ENCODE measurements at regions of chr5 and their contacts with region 1.

Region 1: DNA sequence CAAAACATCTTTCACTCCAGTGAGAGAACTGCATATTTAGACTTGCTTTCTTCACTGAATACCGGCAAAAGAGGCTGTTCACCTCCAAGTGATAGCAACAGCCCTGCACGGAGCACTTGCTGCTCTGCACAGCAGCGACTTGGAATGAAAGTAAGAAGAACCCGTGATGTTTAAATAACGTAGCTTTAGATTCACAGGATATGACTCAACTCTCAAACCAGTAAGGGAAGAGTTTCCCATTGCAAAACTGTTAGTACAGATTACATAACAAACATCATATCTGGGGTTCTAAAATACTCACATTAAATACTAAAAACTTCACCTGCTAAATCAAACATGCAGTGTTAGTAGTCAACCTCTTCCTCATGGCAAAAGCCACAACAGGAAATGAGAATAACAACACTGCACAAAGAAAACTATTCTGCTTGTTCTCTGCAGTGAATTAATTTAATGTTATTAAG is 203.4 kb downstream of the MCTP1 start:
- DNase-seq: peak; percentile 93
- H3K4me3 Mint-ChIP-seq: peak overlapping the region; percentile 76
- H3K27ac Mint-ChIP-seq: peak overlapping the region; percentile 84
- H3K4me1 Mint-ChIP-seq: peaks cover 28% of the 10 kb centered on the region
- H3K27me3 Mint-ChIP-seq: no peaks in the 10 kb centered on the region
- CTCF ChIP-seq: no peak

Region 2: DNA sequence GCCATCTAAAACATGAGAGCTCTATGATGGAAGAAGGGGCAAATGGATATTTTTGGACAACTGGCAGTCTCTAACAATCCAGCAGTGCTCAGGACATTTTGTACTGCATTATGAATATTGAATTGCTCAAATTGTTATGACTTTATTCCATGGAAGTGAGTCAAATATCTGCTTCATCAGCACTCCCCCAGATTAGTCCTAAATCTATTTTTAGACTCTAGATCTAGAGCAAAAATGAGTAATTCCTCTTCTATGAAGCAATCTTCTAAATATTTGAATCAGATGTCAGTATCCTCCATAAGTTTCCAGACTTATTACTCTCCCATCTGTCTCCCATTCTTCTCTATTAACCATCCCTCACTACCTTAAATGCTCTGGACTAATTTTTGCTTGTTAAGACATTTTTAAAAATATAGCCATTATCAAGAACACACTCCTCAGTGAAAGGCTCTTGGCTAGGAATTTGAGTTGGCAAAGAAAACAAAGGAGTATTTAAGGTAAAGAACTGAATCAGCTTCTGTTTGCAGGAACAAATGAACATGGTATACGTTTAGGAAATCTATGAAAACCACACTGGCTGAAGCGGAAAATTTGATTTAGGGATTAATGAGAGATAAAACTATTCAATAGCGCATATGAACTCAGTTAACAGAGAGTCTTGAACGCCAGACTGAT is 97.5 kb before region 1 on chr5:
- CTCF ChIA-PET with region 1: interaction called, 7 read pairs
- POLR2A ChIA-PET with region 1: interaction called, 7 read pairs
- intact Hi-C with region 1: loop called (anchors 2 kb)
- DNase-seq: peak; percentile 58
- H3K4me3 Mint-ChIP-seq: no peak overlapping the region
- H3K27ac Mint-ChIP-seq: peak overlapping the region; percentile 66
- H3K4me1 Mint-ChIP-seq: peaks cover 19% of the 10 kb centered on the region
- H3K27me3 Mint-ChIP-seq: no peaks in the 10 kb centered on the region
- CTCF ChIP-seq: no peak

Region 3: DNA sequence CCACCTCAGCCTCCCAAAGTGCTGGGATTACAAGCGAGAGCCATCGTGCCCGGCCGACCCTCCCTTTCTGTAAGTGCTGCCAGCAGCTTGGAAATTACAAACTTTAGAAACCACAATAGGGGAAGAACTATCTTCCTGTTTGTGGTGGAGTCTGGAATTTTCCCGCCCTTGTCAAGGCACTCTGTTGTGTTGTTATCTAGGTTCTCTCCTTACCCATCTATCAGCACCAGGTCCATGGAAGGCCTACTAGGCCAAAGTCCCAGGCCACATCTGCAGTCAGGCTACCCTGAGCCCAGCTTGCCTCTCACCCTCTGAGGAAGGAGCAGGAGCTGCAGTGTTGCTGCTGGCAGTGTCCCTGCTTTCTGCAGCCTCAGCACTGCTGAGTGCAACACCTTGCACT is 11.6 kb before region 1 on chr5:
- CTCF ChIA-PET with region 1: no interaction called
- POLR2A ChIA-PET with region 1: interaction called, 21 read pairs
- intact Hi-C with region 1: no loop called
- DNase-seq: no peak
- H3K4me3 Mint-ChIP-seq: no peak overlapping the region
- H3K27ac Mint-ChIP-seq: no peak overlapping the region
- H3K4me1 Mint-ChIP-seq: peaks cover 13% of the 10 kb centered on the region
- H3K27me3 Mint-ChIP-seq: no peaks in the 10 kb centered on the region
- CTCF ChIP-seq: no peak

Region 4: GRCh38 chr5:95238560-95239325 is 157.2 kb after region 1 on chr5:
- CTCF ChIA-PET with region 1: no interaction called
- POLR2A ChIA-PET with region 1: no interaction called
- intact Hi-C with region 1: loop called (anchors 5 kb)
- DNase-seq: peak; percentile 55
- H3K4me3 Mint-ChIP-seq: no peak overlapping the region
- H3K27ac Mint-ChIP-seq: no peak overlapping the region
- H3K4me1 Mint-ChIP-seq: peaks cover 6% of the 10 kb centered on the region
- H3K27me3 Mint-ChIP-seq: peaks cover 13% of the 10 kb centered on the region
- CTCF ChIP-seq: peak; percentile 43

Region 5: DNA sequence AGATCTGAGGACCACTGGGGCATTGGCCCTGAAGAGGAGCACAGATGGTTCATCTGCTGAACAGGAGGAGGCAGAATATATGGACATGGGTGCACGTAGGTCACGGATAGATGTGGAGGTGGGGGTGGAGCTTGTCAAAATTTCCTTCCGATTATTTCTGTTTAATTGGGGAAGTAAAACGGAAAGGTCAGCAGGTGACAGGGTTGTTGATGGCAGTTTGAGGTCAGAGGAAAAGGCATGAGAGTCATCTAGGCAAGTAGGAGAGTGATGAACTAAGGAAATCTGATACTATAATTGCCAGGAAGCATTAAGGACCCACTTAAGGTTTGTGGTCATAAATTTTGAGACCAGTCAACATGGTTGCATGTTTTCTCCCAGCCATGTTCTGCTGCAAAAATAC is 301.3 kb after region 1 on chr5:
- CTCF ChIA-PET with region 1: no interaction called
- POLR2A ChIA-PET with region 1: no interaction called
- intact Hi-C with region 1: no loop called
- DNase-seq: no peak
- H3K4me3 Mint-ChIP-seq: no peak overlapping the region
- H3K27ac Mint-ChIP-seq: no peak overlapping the region
- H3K4me1 Mint-ChIP-seq: no peaks in the 10 kb centered on the region
- H3K27me3 Mint-ChIP-seq: no peaks in the 10 kb centered on the region
- CTCF ChIP-seq: no peak

Measured in MCF 10A (cell line).